Left ventricle myocardium superior (tissue), 1 donor: ENCODE measurements at regions of chr10 and their contacts with region 1.

Region 1: DNA sequence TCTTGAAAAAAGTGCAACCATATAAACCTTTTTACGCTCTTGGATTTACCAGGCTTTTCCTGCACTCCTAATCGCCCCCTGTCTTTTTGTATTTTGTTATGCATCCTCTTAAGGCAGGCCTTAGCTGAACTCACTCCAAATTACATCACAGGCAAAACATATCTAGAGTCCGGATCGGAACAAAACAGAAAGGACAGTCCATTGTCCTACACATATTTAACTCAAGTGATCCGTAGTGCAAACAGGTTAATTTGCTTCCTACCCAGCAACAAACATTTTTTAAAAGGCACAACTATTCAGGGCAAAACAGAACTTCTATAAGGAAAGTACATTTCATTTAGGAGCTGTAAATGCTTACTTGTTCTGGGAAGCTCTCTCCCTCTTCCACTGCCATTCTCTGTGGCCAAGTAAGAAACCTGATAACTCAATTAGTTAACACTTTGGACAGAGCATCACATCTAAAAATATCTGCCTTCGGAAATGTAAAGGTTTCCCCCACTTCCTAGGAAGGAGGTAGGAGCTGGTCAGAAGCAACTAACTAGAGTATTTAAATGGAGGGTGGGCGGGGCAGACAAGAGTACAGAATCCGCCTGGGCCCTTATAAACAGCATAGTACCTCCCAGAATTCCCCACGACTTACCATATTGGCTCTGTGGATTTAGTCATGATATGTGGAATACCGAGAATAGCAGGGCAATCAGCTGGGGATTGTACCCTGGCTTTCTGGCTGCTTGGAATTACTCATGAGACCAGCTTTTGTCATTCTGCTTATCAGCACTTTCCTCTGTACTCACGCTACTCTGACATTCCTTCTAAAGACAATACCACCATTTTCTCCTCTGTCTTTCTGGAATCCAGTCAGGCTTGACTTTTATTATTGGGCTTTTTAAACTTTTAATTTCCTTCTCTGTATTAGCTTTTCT is 89.5 kb downstream of the ANK3 start:
- DNase-seq: no peak
- ATAC-seq: peak; percentile 89

Region 2: DNA sequence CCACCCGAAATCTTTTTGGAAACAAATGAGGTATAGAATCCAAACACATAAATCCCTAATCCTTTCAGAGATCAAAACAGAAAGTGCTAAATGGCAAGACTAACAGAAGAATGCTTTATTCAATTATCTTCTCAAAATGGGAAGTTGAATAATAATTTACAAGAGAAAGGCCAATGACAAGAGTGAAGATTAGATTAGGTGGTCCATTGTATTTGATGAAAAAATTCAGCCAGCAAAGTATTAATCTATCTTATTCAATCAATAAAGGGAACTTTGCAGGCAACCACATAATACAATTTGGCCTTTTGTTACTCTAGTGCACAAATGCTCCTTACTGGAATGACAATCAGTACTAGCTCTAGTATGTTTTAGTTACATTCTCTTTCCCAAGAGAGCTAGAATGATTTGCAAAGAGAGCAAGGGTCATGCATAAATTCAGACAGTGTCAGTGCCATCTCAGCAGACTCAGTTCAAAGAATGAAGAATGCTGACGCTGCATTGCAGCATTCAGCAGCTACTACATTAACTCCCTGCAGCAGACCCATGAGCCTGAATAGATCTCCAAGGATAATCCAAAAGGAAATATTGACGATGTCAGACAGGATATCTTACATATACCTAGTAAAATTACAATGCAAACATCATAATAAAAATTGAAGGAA is 42.3 kb before region 1 on chr10:
- intact Hi-C with region 1: no loop called
- DNase-seq: no peak
- ATAC-seq: peak; percentile 46

Region 3: GRCh38 chr10:60351191-60351853 is 51.1 kb after region 1 on chr10:
- intact Hi-C with region 1: loop called (anchors 5 kb)
- DNase-seq: no peak
- ATAC-seq: no peak

Region 4: GRCh38 chr10:60384708-60385398 is 84.6 kb after region 1 on chr10:
- intact Hi-C with region 1: no loop called
- DNase-seq: no peak
- ATAC-seq: peak; percentile 82